ENCODE measurements at regions of chr5 and their contacts with region 1.

Region 1: DNA sequence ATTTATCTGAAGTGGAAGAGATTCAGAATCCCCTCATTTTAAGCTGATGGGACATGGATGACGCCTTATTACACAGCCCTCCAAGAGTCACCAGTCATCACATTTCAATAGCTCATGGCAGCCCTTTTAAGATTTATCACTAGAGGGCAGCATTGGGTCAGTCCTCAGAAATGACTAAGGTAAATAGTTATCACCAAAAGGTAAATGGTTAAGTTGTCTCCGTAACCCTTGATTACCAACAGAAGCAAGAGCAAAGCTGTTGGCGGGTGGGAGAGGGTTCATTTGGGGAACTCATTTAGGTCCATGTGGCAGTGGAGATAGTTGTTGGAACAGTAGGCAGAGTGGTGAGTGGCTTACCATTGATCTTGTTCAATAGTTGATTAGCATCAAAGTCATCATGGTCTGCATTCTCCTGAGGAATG is 12.0 kb upstream of the C9 start:
- DNase-seq: no peak
- ATAC-seq: peak; percentile 74 to 82
- H3K4me3 ChIP-seq: no peak overlapping the region
- H3K27ac ChIP-seq: no peak overlapping the region
- H3K4me1 ChIP-seq: no peaks in the 10 kb centered on the region
- H3K27me3 ChIP-seq: no peaks in the 10 kb centered on the region
- CTCF ChIP-seq: peak; percentile 72

Region 2: GRCh38 chr5:39547553-39548154 is 171.3 kb after region 1 on chr5:
- intact Hi-C with region 1: loop called (anchors 10 kb)
- DNase-seq: no peak
- ATAC-seq: peak in 1 of 2 donors; percentile 79
- H3K4me3 ChIP-seq: no peak overlapping the region
- H3K27ac ChIP-seq: no peak overlapping the region
- H3K4me1 ChIP-seq: peaks cover 7% of the 10 kb centered on the region
- H3K27me3 ChIP-seq: no peaks in the 10 kb centered on the region
- CTCF ChIP-seq: peak; percentile 74